HepG2 (cell line): ENCODE measurements at regions of chr9 and their contacts with region 1.

Region 1: DNA sequence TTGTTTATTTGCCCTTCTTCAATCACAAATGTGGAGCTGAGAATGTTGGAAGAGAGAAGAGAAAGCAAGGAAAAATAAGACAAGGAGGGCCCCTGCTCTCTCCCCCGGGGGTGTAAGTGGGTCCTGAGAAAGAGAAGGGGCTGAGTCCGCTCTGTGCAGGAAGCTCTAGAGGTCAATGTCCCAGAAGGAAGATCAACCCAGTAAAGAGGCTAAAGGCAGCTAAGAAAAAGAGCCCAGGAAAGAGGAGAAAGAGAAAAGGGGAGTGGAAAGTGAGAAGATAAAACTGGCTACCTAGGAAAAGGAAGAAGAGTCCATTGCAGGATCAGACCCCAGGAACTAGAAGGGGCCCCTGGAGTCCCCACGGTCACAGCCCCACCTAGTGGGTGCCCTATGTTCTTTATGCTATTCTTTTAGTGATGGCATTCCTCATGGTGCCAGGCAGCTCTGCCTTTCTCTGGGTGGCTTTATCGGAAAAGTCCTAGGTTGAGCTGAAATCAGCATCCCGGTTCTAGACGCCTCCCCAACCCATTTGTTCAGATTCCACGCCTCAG is 583.4 kb downstream of the ACTL7B start:
- DNase-seq: peak; percentile 16
- ATAC-seq: peak; percentile 91
- H3K4me3 ChIP-seq: no peak overlapping the region
- H3K27ac ChIP-seq: no peak overlapping the region
- H3K4me1 ChIP-seq: peaks cover 10% of the 10 kb centered on the region
- H3K27me3 ChIP-seq: no peaks in the 10 kb centered on the region
- CTCF ChIP-seq: peak; percentile 56
- EP300 ChIP-seq: no peak
- POLR2A ChIP-seq: no peak
- RAD21 ChIP-seq: peak; percentile 40; the same call in 1 of the 2 replicates

Region 2: DNA sequence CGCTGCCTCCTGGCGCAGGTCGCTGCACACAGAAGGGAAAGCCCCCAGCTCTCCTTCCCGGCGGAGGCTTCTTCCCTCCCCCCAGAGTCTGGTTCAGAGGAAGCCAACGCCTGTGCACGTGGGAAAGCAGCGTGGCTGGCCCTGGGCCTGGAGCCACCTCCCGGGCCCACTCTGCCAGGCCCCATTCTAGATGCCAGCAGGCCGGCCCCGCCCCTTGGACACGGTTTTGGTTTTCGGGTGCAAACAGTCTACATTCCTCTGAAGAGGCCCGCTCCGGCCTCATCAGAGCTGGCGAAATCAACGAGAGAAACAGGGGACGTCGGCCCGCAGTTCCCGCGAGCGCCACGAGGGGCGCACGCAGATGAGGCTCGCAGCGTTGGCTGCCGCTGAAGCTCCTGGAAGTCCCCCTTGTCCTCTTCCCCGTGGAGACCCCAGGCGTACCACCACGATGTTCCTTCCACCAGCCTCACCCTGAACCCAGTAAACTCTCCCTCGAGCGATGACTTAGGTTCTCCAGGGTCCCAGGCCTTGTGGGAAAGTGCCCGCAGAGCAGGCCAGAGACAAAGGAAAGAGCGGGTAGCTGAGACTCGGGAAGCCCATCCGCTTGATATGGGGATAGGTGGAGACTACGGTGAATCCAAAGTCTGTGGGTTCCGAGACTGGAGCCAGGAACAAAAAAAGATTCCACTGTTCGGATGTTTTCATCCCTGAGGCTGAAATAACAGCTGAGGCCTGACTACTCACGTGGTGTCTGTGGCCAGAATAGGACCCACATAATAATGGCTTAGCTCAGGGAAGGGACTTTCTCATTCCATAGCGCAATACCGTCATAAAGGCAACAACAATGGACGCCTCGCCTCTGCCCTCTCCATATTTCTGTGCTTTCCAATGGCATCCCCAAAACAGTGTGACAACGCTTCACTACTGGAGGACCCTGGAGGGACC is 847.1 kb before region 1 on chr9:
- CTCF ChIA-PET with region 1: no interaction called
- POLR2A ChIA-PET with region 1: no interaction called
- in situ Hi-C with region 1: loop called (anchors 5 kb)
- intact Hi-C with region 1: loop called (anchors 1 kb)
- DNase-seq: peak; percentile 50
- ATAC-seq: peak; percentile 87
- H3K4me3 ChIP-seq: peak overlapping the region in 1 of 3 experiments; percentile 59; a peak in 2 of 6 replicates
- H3K27ac ChIP-seq: no peak overlapping the region
- H3K4me1 ChIP-seq: peaks cover 5% of the 10 kb centered on the region; the same call in 1 of the 2 replicates
- H3K27me3 ChIP-seq: 0 out of 5 replicates have a peak, but pooled peaks cover 0 to 4% of the 10 kb centered on the region in 2 experiments
- CTCF ChIP-seq: peak; percentile 86
- EP300 ChIP-seq: no peak
- POLR2A ChIP-seq: no peak
- RAD21 ChIP-seq: no peak; the same call in 1 of the 2 replicates

Region 3: GRCh38 chr9:107472581-107473340 is 799.7 kb before region 1 on chr9:
- CTCF ChIA-PET with region 1: no interaction called
- POLR2A ChIA-PET with region 1: no interaction called
- in situ Hi-C with region 1: loop called (anchors 10 kb)
- intact Hi-C with region 1: no loop called
- DNase-seq: no peak
- ATAC-seq: no peak
- H3K4me3 ChIP-seq: no peak overlapping the region
- H3K27ac ChIP-seq: no peak overlapping the region
- H3K4me1 ChIP-seq: no peaks in the 10 kb centered on the region
- H3K27me3 ChIP-seq: no peaks in the 10 kb centered on the region
- CTCF ChIP-seq: no peak
- EP300 ChIP-seq: no peak
- POLR2A ChIP-seq: no peak
- RAD21 ChIP-seq: no peak

Region 4: GRCh38 chr9:108207561-108208165 is 64.8 kb before region 1 on chr9:
- CTCF ChIA-PET with region 1: no interaction called
- POLR2A ChIA-PET with region 1: no interaction called
- in situ Hi-C with region 1: no loop called
- intact Hi-C with region 1: no loop called
- DNase-seq: no peak
- ATAC-seq: no peak
- H3K4me3 ChIP-seq: no peak overlapping the region
- H3K27ac ChIP-seq: no peak overlapping the region
- H3K4me1 ChIP-seq: no peaks in the 10 kb centered on the region
- H3K27me3 ChIP-seq: no peaks in the 10 kb centered on the region; a peak in 1 of 5 replicates
- CTCF ChIP-seq: no peak
- EP300 ChIP-seq: no peak
- POLR2A ChIP-seq: no peak
- RAD21 ChIP-seq: no peak

Region 5: GRCh38 chr9:108444400-108445358 is 172.3 kb after region 1 on chr9:
- CTCF ChIA-PET with region 1: no interaction called
- POLR2A ChIA-PET with region 1: no interaction called
- in situ Hi-C with region 1: no loop called
- intact Hi-C with region 1: no loop called
- DNase-seq: peak; percentile 72
- ATAC-seq: no peak
- H3K4me3 ChIP-seq: peak overlapping the region in 1 of 3 experiments; percentile 7; a peak in 1 of 6 replicates
- H3K27ac ChIP-seq: peak overlapping the region; percentile 82
- H3K4me1 ChIP-seq: peaks cover 66% of the 10 kb centered on the region
- H3K27me3 ChIP-seq: no peaks in the 10 kb centered on the region
- CTCF ChIP-seq: peak; percentile 21; the same call in 1 of the 2 replicates
- EP300 ChIP-seq: no peak; a peak in 1 of 4 replicates
- POLR2A ChIP-seq: no peak
- RAD21 ChIP-seq: no peak